ENCODE measurements at regions of chr10 and their contacts with region 1.

Region 1: DNA sequence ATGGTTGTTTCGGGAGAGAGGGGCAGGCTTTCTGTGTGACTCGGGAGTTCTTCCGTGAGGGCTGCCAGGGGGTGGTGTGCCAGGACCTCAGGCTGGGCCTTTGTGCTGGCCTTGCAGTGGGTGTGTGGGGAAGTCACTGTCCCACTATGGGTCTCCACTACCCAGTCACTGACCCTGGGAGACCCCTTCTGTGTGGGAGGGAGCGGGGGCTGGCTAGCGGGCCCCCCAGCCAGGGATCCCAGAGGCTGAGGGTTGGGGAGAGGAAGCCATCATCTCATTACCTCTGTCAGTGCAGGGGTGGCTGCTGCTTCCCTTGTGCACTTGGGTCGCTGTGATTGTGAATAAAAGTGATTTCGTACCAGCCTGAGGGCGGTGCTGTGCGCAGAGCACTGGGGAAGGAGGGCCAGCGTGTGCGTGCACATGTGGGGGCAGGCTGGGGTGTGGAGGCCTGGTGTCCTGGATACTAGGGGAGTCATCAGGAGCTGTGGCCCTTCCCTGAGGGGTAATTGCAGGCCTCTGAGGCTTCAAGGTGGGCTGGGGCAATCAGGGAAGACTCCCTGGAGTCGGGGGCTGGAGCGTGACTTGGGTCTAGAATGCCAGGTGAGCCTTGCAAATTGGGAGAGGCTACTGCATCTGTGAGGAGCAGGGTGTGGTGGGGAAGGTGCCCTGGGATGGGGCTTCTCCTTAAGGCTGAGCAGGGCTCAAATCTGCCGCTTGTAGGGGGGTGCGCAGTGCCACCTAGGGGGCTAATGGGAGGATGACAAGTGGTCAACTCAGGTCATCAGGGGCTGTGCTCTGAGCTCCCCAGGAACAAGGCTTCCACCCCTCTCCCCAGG is 98.9 kb downstream of the NEURL1 start:
- DNase-seq: no peak
- ATAC-seq: peak; percentile 95
- H3K4me3 ChIP-seq: no peak overlapping the region
- H3K27ac ChIP-seq: no peak overlapping the region
- H3K4me1 ChIP-seq: no peaks in the 10 kb centered on the region
- H3K27me3 ChIP-seq: no peaks in the 10 kb centered on the region
- CTCF ChIP-seq: peak; percentile 73 to 79 (median 77)
- EP300 ChIP-seq: no peak
- POLR2A ChIP-seq: no peak; the same call in none of the 2 replicates
- RAD21 ChIP-seq: peak; percentile 73

Region 2: GRCh38 chr10:103504181-103504783 is 88.1 kb before region 1 on chr10:
- CTCF ChIA-PET with region 1: interaction called, 5 read pairs
- POLR2A ChIA-PET with region 1: no interaction called
- RAD21 ChIA-PET with region 1: no interaction called
- SMC1A ChIA-PET with region 1: no interaction called
- in situ Hi-C with region 1: no loop called
- intact Hi-C with region 1: loop called (anchors 5 kb)
- DNase-seq: peak; percentile 28
- ATAC-seq: peak; percentile 78
- H3K4me3 ChIP-seq: no peak overlapping the region
- H3K27ac ChIP-seq: no peak overlapping the region
- H3K4me1 ChIP-seq: peaks cover 6% of the 10 kb centered on the region
- H3K27me3 ChIP-seq: peaks cover 0 to 3% of the 10 kb centered on the region in 2 experiments; a peak in 1 of 4 replicates
- CTCF ChIP-seq: no peak
- EP300 ChIP-seq: no peak
- POLR2A ChIP-seq: no peak
- RAD21 ChIP-seq: no peak